Gastrocnemius medialis (tissue), 4 donors: ENCODE measurements at regions of chr11 and their contacts with region 1.

Region 1: GRCh38 chr11:119168471-119169281 is at the start of gene NLRX1:
- DNase-seq: peak; percentile 70 to 82
- ATAC-seq: peak; percentile 92 to 95
- H3K4me3 ChIP-seq: peak within 1 kb of the TSS; percentile 71 to 91 (median 80)
- H3K27ac ChIP-seq: peak within 1 kb of the TSS; percentile 82 to 95 (median 92)
- H3K4me1 ChIP-seq: peaks cover 8 to 10% of the 10 kb centered on the region in 2 donors
- H3K27me3 ChIP-seq: no peaks in the 10 kb centered on the region
- CTCF ChIP-seq: peak; percentile 74 to 92 (median 90)
- POLR2A ChIP-seq: peak; percentile 30 to 62
- total RNA-seq, gene NLRX1: 12.2 to 21.3 (median 16.4) TPM

Region 2: DNA sequence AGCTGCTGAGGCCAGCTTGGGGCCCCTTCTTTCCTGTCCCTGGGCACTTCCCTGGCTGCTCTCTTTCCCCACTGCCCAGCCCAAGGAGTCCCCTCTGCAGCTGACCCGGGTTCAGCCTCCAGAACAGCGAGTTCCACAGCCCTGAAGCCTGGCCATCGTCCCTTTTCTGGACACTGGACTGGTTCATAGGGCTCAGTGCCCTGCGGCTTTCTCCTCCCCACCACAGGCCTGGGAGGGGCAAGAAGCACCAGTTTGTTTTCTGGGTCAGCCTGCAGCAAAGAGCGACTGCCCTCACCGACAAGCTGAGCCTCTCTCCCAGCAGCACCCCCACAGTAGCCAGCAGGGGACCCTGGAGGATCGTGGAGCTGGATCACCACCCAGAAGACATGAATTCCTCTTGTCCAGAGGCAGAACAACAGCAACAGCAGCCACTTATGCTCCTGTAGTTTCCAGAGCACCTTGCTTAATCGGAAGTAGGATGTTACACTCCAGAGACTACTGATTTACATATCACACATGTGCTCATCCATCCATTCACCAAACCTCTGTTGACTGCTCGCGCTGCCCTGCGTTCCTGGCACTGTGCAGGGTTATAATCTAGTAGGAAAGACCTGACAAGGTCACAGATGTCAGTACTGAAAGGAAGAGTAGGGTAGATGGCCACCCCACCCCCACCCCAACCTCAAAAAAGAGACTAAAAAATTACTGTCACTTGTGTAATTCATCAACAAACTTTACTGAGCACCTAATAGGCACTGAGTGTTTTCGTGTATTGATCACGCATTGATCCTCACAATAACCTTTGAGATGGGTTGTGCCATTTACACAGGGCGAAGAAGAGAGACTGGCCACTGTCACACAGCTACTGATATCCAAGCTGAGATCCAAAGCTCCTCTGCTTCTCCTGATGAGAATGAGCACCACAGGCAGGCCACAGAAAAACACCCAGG is 298.0 kb before region 1 on chr11:
- in situ Hi-C with region 1: no loop called
- intact Hi-C with region 1: loop called (anchors 1 kb)
- DNase-seq: peak; percentile 66 to 67
- ATAC-seq: peak; percentile 68 to 74
- H3K4me3 ChIP-seq: peak overlapping the region; percentile 35 to 46 (median 42)
- H3K27ac ChIP-seq: peak overlapping the region; percentile 89 to 95 (median 94)
- H3K4me1 ChIP-seq: peaks cover 16 to 25% of the 10 kb centered on the region in 2 donors
- H3K27me3 ChIP-seq: no peaks in the 10 kb centered on the region
- CTCF ChIP-seq: no peak
- POLR2A ChIP-seq: peak; percentile 31 to 48

Region 3: DNA sequence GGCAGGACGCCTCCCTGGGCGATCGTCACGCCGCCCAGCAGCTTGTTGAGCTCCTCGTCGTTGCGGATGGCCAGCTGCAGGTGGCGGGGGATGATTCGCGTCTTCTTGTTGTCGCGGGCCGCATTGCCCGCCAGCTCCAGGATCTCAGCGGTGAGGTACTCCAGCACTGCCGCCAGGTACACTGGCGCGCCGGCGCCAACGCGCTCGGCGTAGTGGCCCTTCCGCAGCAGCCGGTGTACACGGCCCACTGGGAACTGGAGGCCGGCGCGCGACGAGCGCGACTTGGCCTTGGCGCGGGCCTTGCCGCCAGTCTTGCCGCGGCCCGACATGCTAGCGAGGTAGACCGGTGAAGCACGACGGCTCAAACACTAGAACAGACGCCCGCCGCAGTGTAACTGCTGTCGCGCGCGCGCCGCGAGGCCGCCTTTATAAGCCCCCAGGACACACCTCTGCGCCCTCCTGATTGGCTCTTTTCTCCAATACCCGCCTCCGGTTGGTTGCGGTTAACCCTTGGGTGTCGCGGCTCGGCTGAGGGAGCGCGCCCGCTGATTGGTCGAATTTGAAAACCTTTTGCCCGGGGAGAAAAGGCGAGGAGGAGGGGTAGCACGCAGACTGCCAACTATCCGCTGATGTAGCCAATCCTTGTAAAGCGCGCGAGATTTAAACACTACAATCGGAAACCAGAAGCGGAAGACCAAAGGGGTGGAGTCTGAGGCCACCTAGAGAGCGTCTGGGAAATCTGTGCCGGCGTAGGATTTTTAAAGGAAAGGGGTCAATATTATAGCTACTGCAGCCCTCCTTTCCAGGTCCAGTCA is 73.4 kb before region 1 on chr11:
- in situ Hi-C with region 1: no loop called
- intact Hi-C with region 1: loop called (anchors 1 kb)
- DNase-seq: peak; percentile 99 to 100
- ATAC-seq: peak; percentile 94
- H3K4me3 ChIP-seq: peak overlapping the region; percentile 69 to 99 (median 88)
- H3K27ac ChIP-seq: peak overlapping the region; percentile 91 to 98 (median 94)
- H3K4me1 ChIP-seq: peaks cover 17 to 24% of the 10 kb centered on the region in 2 donors
- H3K27me3 ChIP-seq: no peaks in the 10 kb centered on the region
- CTCF ChIP-seq: peak in 4 of 5 experiments; percentile 18 to 70 (median 35)
- POLR2A ChIP-seq: peak; percentile 99 to 100

Region 4: DNA sequence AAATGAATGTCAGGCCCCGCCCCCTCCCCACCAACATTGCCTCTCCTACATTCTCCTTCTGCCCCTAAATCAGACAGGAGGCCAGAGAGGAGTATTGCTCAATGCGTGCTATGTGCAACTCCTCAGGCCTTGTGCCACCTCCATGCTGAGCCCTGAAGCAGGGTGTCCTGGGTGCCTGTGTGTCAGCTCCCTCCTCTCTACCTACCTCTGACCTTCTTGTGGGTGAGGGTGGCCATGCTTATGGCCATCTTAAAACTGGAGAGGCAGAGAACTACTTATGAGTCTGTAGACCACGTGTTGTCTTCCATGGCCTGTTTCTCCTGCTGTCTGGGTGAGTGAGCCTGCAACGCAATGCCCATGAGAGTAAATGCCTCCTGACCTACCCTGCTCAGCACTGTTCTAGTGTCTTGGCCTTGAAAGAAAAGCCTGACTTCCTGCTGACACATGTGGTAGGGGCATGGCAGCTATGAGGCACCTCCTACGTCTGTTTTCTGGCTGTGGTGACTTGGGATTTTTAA is 137.8 kb after region 1 on chr11:
- in situ Hi-C with region 1: no loop called
- intact Hi-C with region 1: loop called (anchors 5 kb)
- DNase-seq: peak in 1 of 2 donors; percentile 74
- ATAC-seq: peak; percentile 48 to 84
- H3K4me3 ChIP-seq: no peak overlapping the region
- H3K27ac ChIP-seq: peak overlapping the region; percentile 63 to 74 (median 71)
- H3K4me1 ChIP-seq: peaks cover 44 to 47% of the 10 kb centered on the region in 2 donors
- H3K27me3 ChIP-seq: no peaks in the 10 kb centered on the region
- CTCF ChIP-seq: no peak
- POLR2A ChIP-seq: no peak